ENCODE measurements at regions of chr5 and their contacts with region 1.

Region 1: GRCh38 chr5:44860267-44860666 is 51.5 kb downstream of the MRPS30 start:
- DNase-seq: no peak
- ATAC-seq: no peak
- H3K4me3 ChIP-seq: no peak overlapping the region
- H3K4me3 Mint-ChIP-seq: no peak overlapping the region
- H3K27ac ChIP-seq: no peak overlapping the region
- H3K27ac Mint-ChIP-seq: no peak overlapping the region
- H3K4me1 ChIP-seq: no peaks in the 10 kb centered on the region
- H3K4me1 Mint-ChIP-seq: no peaks in the 10 kb centered on the region
- H3K27me3 ChIP-seq: no peaks in the 10 kb centered on the region
- H3K27me3 Mint-ChIP-seq: peaks cover 0 to 4% of the 10 kb centered on the region in 2 donors

Region 2: GRCh38 chr5:42970636-42971559 is 1889.4 kb before region 1 on chr5:
- CTCF ChIA-PET with region 1: interaction called in 1 of 2 experiments, 10 read pairs
- POLR2A ChIA-PET with region 1: no interaction called
- DNase-seq: peak in 1 of 35 experiments; percentile 31
- ATAC-seq: peak in 1 of 4 experiments; percentile 17
- H3K4me3 ChIP-seq: no peak overlapping the region
- H3K4me3 Mint-ChIP-seq: no peak overlapping the region
- H3K27ac ChIP-seq: no peak overlapping the region
- H3K27ac Mint-ChIP-seq: no peak overlapping the region
- H3K4me1 ChIP-seq: peaks cover 0 to 4% of the 10 kb centered on the region in 2 experiments
- H3K4me1 Mint-ChIP-seq: peaks cover 6 to 8% (median 8%) of the 10 kb centered on the region in 3 donors
- H3K27me3 ChIP-seq: no peaks in the 10 kb centered on the region
- H3K27me3 Mint-ChIP-seq: no peaks in the 10 kb centered on the region

Region 3: DNA sequence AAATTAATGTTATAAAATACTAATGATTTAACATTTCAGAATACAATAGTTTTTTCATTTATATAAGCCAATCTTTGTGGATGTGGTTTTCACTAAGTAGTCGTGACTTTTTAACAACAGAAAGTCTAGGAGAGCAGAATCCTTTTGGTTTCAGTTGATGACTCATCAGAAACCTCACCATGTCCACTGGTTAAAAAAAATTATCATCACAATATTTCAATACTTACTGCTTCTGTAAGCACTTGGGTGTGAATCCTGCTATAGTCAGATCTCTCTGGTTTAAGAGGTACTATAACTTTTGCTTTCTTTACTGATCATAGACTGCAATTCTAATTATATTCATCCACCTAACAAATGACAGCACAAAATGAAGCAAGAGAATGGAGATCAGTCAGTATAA is 25.6 kb after region 1 on chr5:
- CTCF ChIA-PET with region 1: no interaction called
- POLR2A ChIA-PET with region 1: no interaction called
- DNase-seq: no peak
- ATAC-seq: no peak
- H3K4me3 ChIP-seq: no peak overlapping the region
- H3K4me3 Mint-ChIP-seq: no peak overlapping the region
- H3K27ac ChIP-seq: no peak overlapping the region
- H3K27ac Mint-ChIP-seq: no peak overlapping the region
- H3K4me1 ChIP-seq: no peaks in the 10 kb centered on the region
- H3K4me1 Mint-ChIP-seq: no peaks in the 10 kb centered on the region
- H3K27me3 ChIP-seq: no peaks in the 10 kb centered on the region
- H3K27me3 Mint-ChIP-seq: no peaks in the 10 kb centered on the region